ENCODE measurements at regions of chr6 and their contacts with region 1.

Region 1: GRCh38 chr6:108592371-108593337 is 31.9 kb downstream of the FOXO3 start:
- DNase-seq: peak in 1 of 3 donors; percentile 57
- ATAC-seq: peak; percentile 37 to 44
- H3K4me3 ChIP-seq: peak overlapping the region; percentile 18
- H3K27ac ChIP-seq: peak overlapping the region; percentile 99
- H3K4me1 ChIP-seq: peaks cover 35% of the 10 kb centered on the region
- H3K27me3 ChIP-seq: no peaks in the 10 kb centered on the region

Region 2: DNA sequence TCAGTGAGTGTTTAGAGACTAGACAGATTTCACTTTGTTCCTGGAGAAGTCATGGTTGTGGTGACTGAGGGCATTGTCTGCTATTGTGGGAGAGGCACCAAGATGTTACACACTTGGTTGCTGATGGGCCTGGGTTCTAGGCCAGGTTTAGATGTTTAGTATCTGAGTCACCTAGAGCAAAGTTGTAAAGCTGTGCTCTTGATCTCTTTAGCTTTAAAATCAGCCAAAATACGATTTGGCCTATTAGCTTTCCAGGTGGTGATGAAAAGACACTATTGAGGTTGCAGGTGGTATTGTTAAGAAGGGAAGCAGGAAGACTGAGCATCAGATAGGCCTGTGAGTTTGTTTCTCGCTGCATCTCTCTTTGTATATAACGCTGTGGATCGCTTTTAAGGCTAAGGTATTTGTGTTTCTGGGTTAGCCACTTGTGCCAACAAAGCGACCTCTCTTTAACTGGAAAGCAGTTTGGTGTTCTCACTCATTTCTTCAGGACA is 16.7 kb after region 1 on chr6:
- intact Hi-C with region 1: loop called in 1 of 4 experiments (anchors 2 kb)
- DNase-seq: no peak
- ATAC-seq: peak in 1 of 2 donors; percentile 58
- H3K4me3 ChIP-seq: no peak overlapping the region
- H3K27ac ChIP-seq: peak overlapping the region; percentile 58
- H3K4me1 ChIP-seq: peaks cover 12% of the 10 kb centered on the region
- H3K27me3 ChIP-seq: no peaks in the 10 kb centered on the region

Region 3: DNA sequence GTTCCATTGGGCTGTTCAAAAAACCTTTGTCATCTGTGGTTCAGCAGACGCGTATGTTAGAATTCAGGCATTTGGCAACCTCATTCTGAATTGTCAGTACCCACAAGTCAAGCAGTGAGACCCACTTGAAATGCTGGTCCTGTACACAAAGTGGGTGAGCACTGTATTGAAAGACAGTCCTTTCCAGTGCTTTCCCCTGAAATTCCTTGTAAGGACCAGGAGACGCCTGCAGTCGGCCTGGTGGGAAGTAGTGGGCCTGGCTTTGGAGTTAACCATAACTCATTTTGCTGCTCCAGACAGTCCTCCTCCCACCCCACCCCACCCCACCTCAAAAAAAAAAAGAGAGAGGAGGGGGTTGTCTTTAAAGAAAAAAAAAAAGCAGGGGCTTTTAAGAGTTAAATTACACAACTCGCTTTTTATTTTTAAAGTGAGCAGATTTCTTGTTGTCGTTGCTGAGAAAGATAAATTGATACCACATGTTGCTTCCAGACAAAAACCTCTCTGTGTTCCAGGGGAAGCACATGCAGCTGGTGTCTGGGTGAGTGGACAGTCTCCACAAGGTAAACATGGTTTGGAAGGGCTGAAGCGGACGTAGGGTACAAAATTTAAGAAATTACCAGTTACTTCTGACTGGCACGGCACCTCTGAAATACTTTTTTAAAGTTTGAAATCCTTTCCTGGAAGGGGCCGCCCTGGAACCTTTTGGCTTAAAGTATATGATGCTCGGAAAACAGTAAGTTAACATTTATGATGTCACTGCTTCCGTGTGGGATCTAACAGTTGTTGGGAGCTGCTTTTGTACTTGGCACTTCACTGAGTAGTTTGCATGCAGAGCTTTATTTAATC is 63.4 kb after region 1 on chr6:
- intact Hi-C with region 1: loop called in 1 of 4 experiments (anchors 10 kb)
- DNase-seq: peak in 1 of 3 donors; percentile 41
- ATAC-seq: peak; percentile 59 to 77
- H3K4me3 ChIP-seq: peak overlapping the region; percentile 23
- H3K27ac ChIP-seq: peak overlapping the region; percentile 78
- H3K4me1 ChIP-seq: peaks cover 31% of the 10 kb centered on the region
- H3K27me3 ChIP-seq: no peaks in the 10 kb centered on the region

Region 4: GRCh38 chr6:108742041-108742440 is 149.4 kb after region 1 on chr6:
- intact Hi-C with region 1: no loop called
- DNase-seq: no peak
- ATAC-seq: no peak
- H3K4me3 ChIP-seq: no peak overlapping the region
- H3K27ac ChIP-seq: no peak overlapping the region
- H3K4me1 ChIP-seq: peaks cover 2% of the 10 kb centered on the region
- H3K27me3 ChIP-seq: no peaks in the 10 kb centered on the region

Measured in right cardiac atrium (tissue), 5 donors.